Astrocyte of the cerebellum (primary cell): ENCODE measurements at regions of chr12 and their contacts with region 1.

Region 1: DNA sequence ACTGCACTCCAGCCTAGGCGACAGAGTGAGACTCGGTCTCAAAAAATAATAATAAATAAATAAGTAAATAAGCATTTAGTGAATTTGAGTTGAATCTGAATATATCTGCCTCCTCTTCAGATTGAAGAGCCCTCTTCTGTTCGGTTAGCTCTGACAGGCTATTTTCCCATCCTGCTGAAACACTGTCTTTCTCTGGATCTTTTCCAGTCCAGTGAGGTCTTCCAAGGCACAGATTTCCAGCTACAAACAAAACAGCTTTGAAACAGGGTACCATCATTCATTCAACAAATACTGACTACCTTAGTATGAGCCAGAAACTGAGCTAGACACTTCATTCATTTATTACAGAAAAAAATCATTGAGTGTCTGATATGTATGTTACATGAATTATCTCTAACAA is 7.2 kb upstream of the SPRYD3 start:
- DNase-seq: no peak
- H3K4me3 ChIP-seq: no peak overlapping the region
- CTCF ChIP-seq: no peak

Region 2: GRCh38 chr12:53287741-53288216 is 201.4 kb after region 1 on chr12:
- in situ Hi-C with region 1: loop called (anchors 5 kb)
- DNase-seq: peak; percentile 34
- H3K4me3 ChIP-seq: no peak overlapping the region
- CTCF ChIP-seq: peak; percentile 65